ENCODE measurements at regions of chr9 and their contacts with region 1.

Region 1: DNA sequence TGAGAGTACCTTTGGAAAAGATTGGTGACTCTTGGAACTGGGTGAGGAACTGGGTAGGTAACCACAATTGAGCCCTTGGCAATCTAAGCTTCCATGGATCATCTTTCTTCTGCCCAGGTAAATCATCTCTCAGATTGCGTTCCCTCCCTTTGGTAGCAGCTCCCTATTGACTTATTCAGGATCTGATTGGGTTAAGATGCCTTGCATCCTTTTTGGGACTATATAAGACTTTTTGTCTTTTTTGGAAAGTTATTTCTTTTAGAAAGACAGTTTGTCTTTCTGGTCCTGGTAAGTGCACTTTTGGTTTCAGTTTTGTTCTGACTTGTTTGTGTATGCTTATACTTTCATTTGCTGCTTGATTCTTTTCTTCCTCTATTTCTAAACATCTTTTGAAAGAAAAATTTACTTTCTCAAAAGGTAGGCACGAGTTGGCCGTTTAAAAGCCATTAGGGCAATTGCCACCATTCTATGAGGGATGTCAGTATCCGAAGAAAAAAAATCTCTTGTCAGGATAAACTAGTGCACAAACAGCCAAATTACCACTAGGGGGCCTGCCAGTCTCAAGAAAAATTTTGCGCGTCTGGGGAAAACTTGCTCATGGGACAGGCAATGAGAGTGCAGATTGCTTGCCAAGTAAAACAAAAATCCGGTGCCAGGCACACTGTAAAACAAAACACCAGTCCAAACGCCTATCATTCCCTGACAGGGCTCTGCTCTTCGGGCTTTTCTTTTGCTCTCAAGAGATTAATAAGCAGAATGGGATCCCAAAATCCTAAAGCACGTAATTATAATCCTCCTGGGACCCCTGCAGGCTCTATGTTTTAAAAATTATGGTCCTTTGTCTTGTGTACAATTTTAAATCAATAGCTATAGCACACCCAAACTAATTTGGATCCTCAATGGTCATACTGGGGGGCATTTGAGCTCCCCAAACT is 12.8 kb downstream of the OR1J1 start:
- DNase-seq: peak; percentile 59
- H3K4me3 Mint-ChIP-seq: peak overlapping the region; percentile 81
- H3K27ac Mint-ChIP-seq: peak overlapping the region; percentile 80
- H3K4me1 Mint-ChIP-seq: peaks cover 17% of the 10 kb centered on the region
- H3K27me3 Mint-ChIP-seq: peaks cover 26% of the 10 kb centered on the region

Region 2: DNA sequence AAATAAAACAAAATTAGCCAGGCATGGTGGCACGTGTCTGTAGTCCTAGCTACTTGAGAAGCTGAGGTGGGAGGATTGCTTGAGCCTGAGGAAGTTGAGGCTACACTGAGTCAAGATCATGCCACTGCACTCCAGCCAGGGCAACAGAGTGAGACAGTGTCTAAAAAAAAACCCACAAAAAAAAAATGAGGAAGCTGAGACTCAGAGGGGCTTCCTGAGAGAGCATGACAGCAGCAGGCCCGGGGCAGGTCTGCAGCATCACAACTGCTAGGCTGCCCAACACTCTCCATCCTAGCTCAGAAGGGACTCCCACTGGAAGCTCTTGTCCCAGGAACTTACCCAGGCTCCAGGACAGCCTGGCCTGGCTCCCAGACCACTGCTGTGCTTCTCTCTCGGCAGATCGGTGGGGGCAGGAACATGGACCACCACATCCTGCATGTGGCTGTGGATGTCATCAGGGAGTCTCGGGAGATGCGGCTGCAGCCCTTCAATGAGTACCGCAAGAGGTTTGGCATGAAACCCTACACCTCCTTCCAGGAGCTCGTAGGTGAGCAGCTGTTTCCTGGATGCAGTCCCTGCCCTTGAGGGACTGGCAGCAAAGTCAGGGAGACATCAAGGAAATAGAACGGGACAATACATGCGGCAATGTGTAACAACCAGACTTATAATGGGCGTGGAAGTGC is 75.0 kb before region 1 on chr9:
- intact Hi-C with region 1: no loop called
- DNase-seq: no peak
- H3K4me3 Mint-ChIP-seq: no peak overlapping the region
- H3K27ac Mint-ChIP-seq: no peak overlapping the region
- H3K4me1 Mint-ChIP-seq: no peaks in the 10 kb centered on the region
- H3K27me3 Mint-ChIP-seq: peaks cover 18% of the 10 kb centered on the region

Region 3: DNA sequence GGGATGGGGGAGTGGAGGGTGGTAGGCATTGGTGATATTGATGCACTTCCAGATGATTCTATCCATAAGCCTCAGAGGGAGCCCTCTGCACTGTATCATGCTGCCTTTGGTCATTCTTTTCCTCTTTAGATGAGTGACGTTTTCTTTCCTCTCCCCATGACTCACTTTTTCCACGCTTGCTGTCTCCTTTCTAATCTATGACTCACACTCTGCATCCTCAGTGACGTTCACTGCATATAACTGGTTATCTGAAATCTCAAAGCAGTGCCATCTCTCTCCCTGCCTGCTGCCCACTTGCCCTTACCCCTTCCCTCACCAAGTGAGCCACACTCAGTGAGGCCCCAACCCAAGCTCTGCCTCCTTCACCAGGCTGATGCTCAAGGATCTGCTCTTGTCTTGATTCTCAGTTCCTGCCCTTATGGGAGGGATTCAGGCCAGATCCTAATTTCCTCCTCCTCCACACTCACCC is 62.5 kb before region 1 on chr9:
- intact Hi-C with region 1: loop called (anchors 1 kb)
- DNase-seq: peak; percentile 33
- H3K4me3 Mint-ChIP-seq: peak overlapping the region; percentile 5
- H3K27ac Mint-ChIP-seq: peak overlapping the region; percentile 86
- H3K4me1 Mint-ChIP-seq: peaks cover 25% of the 10 kb centered on the region
- H3K27me3 Mint-ChIP-seq: peaks cover 6% of the 10 kb centered on the region

Region 4: GRCh38 chr9:122445155-122445749 is 19.6 kb before region 1 on chr9:
- intact Hi-C with region 1: no loop called
- DNase-seq: no peak
- H3K4me3 Mint-ChIP-seq: no peak overlapping the region
- H3K27ac Mint-ChIP-seq: no peak overlapping the region
- H3K4me1 Mint-ChIP-seq: no peaks in the 10 kb centered on the region
- H3K27me3 Mint-ChIP-seq: peaks cover 9% of the 10 kb centered on the region